ENCODE measurements at regions of chr18 and their contacts with region 1.

Region 1: DNA sequence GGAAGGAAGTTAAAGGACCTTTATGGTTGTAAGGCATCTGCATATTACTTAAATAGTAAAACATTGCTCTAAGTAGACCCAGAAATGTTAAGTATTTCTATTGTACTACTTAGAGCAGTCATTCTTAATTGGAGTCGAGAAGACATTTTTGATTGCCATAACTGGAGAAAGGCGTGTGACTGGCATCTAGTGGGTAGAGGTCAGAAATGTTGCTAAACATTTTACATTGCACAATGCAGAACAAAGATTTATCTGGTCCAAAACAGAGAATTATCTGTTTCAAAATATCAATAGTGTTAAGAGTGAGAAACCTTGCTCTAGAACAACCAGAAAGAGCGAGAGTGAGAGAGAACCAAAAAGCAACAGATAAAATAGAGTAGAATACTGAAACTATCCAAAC is 23.3 kb upstream of the ROCK1 start:
- DNase-seq: peak; percentile 20
- H3K4me3 ChIP-seq: no peak overlapping the region
- H3K27ac ChIP-seq: no peak overlapping the region
- H3K4me1 ChIP-seq: no peaks in the 10 kb centered on the region
- H3K27me3 ChIP-seq: no peaks in the 10 kb centered on the region
- CTCF ChIP-seq: peak; percentile 13 to 47

Region 2: GRCh38 chr18:20988726-20989125 is 146.2 kb before region 1 on chr18:
- CTCF ChIA-PET with region 1: no interaction called
- dilution Hi-C with region 1: no loop called
- in situ Hi-C with region 1: no loop called
- intact Hi-C with region 1: no loop called
- DNase-seq: no peak
- H3K4me3 ChIP-seq: no peak overlapping the region
- H3K27ac ChIP-seq: no peak overlapping the region
- H3K4me1 ChIP-seq: no peaks in the 10 kb centered on the region
- H3K27me3 ChIP-seq: no peaks in the 10 kb centered on the region
- CTCF ChIP-seq: no peak

Region 3: DNA sequence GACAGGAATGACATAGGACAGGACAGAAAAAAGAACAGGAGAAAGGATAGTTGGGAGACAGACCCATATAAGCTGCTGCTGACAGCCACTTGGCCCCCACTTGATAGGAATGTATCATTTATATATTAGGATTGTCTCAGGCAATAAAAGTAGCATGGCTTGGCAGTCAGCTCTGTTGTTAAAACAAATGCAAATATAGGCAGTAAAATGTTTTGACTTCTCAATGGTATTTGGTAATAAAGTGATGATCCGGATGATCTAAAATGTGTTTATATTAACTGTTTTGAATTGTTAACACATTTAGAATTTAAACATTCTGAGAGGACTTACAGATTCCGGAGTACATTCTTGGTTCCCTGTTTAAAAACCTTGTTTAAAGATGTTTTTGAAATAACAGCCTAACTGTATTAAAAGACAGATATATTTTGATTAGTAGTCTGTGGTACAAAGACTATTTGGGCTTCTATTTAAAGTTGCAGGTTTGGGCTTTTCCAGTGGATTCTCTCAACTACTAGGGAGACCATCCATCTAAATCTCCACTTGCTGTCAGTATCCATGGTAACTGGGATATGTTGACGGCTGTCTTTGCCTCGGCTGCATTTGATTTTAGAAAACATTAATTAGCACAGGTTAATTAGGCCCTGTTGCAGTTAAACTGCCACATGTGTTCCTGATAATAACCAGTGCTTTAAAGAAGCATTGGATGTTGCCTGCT is 318.1 kb after region 1 on chr18:
- CTCF ChIA-PET with region 1: no interaction called
- dilution Hi-C with region 1: no loop called
- in situ Hi-C with region 1: loop called in 1 of 2 experiments (anchors 25 kb)
- intact Hi-C with region 1: no loop called
- DNase-seq: no peak
- H3K4me3 ChIP-seq: no peak overlapping the region
- H3K27ac ChIP-seq: no peak overlapping the region
- H3K4me1 ChIP-seq: no peaks in the 10 kb centered on the region
- H3K27me3 ChIP-seq: no peaks in the 10 kb centered on the region
- CTCF ChIP-seq: no peak

Measured in mammary epithelial cell (primary cell).